IMR-90 (cell line): ENCODE measurements at regions of chr4 and their contacts with region 1.

Region 1: GRCh38 chr4:16289897-16290554 is 63.8 kb upstream of the TAPT1 start:
- DNase-seq: peak; percentile 46
- ATAC-seq: peak; percentile 85
- H3K4me3 ChIP-seq: no peak overlapping the region
- H3K27ac ChIP-seq: no peak overlapping the region
- H3K4me1 ChIP-seq: no peaks in the 10 kb centered on the region
- H3K27me3 ChIP-seq: peaks cover 10% of the 10 kb centered on the region
- CTCF ChIP-seq: peak; percentile 74
- POLR2A ChIP-seq: no peak
- RAD21 ChIP-seq: peak; percentile 74

Region 2: DNA sequence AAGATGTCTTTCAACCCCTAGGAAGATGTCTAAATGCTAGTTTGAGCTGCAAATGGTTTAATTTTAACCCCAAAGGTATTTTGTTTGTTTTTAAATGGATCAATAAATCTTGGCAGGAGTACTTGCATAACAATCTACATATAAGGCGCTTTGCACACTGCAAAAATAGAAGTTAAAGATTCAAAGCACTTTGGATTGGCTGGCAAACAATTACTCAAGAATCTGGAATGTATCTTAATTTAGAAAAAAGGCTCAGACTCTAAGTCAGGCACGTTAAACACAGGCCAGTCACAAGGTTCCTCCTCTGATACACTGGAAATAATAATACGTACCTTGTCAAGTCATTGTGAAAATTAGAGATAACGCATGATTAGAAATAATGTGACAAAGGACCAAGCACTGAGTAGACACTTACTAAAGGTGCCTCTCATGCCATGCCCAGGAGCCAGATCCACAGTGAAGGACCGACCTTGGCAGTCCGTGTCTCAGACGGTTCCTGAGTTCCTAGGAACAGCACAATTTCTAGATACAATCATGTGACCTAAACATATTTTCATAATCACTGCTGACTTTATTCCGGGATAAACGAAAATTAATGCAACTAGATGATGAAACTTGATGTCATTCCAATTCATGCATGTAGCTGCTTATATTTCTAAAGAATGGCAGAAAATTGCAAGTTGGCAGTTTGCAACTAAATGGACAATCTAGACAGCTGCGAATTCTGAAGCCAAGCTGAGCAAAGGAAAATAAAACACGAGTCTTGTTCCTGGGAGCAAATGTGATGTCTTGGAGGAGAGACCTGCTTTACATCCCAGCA is 255.8 kb before region 1 on chr4:
- CTCF ChIA-PET with region 1: no interaction called
- POLR2A ChIA-PET with region 1: interaction called, 11 read pairs
- dilution Hi-C with region 1: no loop called
- in situ Hi-C with region 1: no loop called
- intact Hi-C with region 1: no loop called
- DNase-seq: peak; percentile 47
- ATAC-seq: peak; percentile 63
- H3K4me3 ChIP-seq: no peak overlapping the region
- H3K27ac ChIP-seq: peak overlapping the region; percentile 30; the same call in 1 of the 2 replicates
- H3K4me1 ChIP-seq: peaks cover 4% of the 10 kb centered on the region; the same call in 1 of the 2 replicates
- H3K27me3 ChIP-seq: no peaks in the 10 kb centered on the region
- CTCF ChIP-seq: no peak
- POLR2A ChIP-seq: no peak
- RAD21 ChIP-seq: no peak

Region 3: GRCh38 chr4:16794816-16795445 is 504.9 kb after region 1 on chr4:
- CTCF ChIA-PET with region 1: no interaction called
- POLR2A ChIA-PET with region 1: no interaction called
- dilution Hi-C with region 1: no loop called
- in situ Hi-C with region 1: loop called (anchors 25 kb)
- intact Hi-C with region 1: loop called (anchors 10 kb)
- DNase-seq: peak; percentile 60
- ATAC-seq: peak; percentile 80
- H3K4me3 ChIP-seq: no peak overlapping the region
- H3K27ac ChIP-seq: no peak overlapping the region
- H3K4me1 ChIP-seq: no peaks in the 10 kb centered on the region
- H3K27me3 ChIP-seq: no peaks in the 10 kb centered on the region
- CTCF ChIP-seq: peak; percentile 84
- POLR2A ChIP-seq: no peak
- RAD21 ChIP-seq: peak; percentile 91

Region 4: DNA sequence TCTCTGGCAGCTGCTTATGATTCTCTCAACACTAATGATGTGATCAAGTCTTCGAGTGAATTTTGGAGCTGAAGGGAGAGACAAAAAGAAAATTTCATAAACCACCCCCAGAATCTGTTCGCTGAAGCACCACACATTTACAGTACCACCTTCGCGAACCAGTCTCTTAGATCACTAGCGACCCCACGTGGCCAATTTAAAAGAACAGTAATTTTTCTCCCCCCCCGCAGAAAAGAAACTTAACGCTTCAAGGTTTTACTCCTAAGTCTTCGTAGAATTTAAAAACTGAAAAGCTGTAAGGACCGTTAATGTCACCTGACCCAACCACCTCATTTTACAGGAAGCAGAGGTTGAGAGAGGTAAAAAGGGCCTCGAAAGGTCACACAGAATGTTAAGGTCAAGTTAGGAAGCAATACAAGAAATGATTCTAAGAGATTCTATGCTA is 1034.4 kb after region 1 on chr4:
- CTCF ChIA-PET with region 1: no interaction called
- POLR2A ChIA-PET with region 1: no interaction called
- dilution Hi-C with region 1: no loop called
- in situ Hi-C with region 1: loop called (anchors 10 kb)
- intact Hi-C with region 1: loop called (anchors 1 kb)
- DNase-seq: peak; percentile 77
- ATAC-seq: peak; percentile 86
- H3K4me3 ChIP-seq: no peak overlapping the region; the same call in 1 of the 2 replicates
- H3K27ac ChIP-seq: peak overlapping the region; percentile 73; the same call in 1 of the 2 replicates
- H3K4me1 ChIP-seq: peaks cover 4% of the 10 kb centered on the region; the same call in 1 of the 2 replicates
- H3K27me3 ChIP-seq: no peaks in the 10 kb centered on the region
- CTCF ChIP-seq: peak; percentile 89
- POLR2A ChIP-seq: peak; percentile 42; the same call in 1 of the 2 replicates
- RAD21 ChIP-seq: peak; percentile 94

Region 5: GRCh38 chr4:17447675-17448298 is 1157.8 kb after region 1 on chr4:
- CTCF ChIA-PET with region 1: interaction called, 4 read pairs
- POLR2A ChIA-PET with region 1: no interaction called
- dilution Hi-C with region 1: no loop called
- in situ Hi-C with region 1: no loop called
- intact Hi-C with region 1: loop called (anchors 1 kb)
- DNase-seq: peak; percentile 81
- ATAC-seq: peak; percentile 93
- H3K4me3 ChIP-seq: no peak overlapping the region
- H3K27ac ChIP-seq: no peak overlapping the region
- H3K4me1 ChIP-seq: 0 out of 2 replicates have a peak, but pooled peaks cover 3% of the 10 kb centered on the region
- H3K27me3 ChIP-seq: peaks cover 2% of the 10 kb centered on the region; the same call in 1 of the 2 replicates
- CTCF ChIP-seq: peak; percentile 83
- POLR2A ChIP-seq: no peak
- RAD21 ChIP-seq: peak; percentile 86